ENCODE measurements at regions of chr2 and their contacts with region 1.

Region 1: GRCh38 chr2:120833127-120833675 is 97.5 kb downstream of the GLI2 start:
- DNase-seq: no peak
- H3K4me3 ChIP-seq: no peak overlapping the region
- H3K27ac ChIP-seq: no peak overlapping the region
- H3K4me1 ChIP-seq: peaks cover 2 to 16% (median 8%) of the 10 kb centered on the region in 4 experiments; a peak in 6 of 7 replicates
- H3K27me3 ChIP-seq: no peaks in the 10 kb centered on the region
- CTCF ChIP-seq: peak in 2 of 3 experiments; percentile 42; a peak in 3 of 4 replicates
- EP300 ChIP-seq: no peak
- POLR2A ChIP-seq: no peak
- RAD21 ChIP-seq: peak; percentile 53 to 67; a peak in 3 of 4 replicates

Region 2: DNA sequence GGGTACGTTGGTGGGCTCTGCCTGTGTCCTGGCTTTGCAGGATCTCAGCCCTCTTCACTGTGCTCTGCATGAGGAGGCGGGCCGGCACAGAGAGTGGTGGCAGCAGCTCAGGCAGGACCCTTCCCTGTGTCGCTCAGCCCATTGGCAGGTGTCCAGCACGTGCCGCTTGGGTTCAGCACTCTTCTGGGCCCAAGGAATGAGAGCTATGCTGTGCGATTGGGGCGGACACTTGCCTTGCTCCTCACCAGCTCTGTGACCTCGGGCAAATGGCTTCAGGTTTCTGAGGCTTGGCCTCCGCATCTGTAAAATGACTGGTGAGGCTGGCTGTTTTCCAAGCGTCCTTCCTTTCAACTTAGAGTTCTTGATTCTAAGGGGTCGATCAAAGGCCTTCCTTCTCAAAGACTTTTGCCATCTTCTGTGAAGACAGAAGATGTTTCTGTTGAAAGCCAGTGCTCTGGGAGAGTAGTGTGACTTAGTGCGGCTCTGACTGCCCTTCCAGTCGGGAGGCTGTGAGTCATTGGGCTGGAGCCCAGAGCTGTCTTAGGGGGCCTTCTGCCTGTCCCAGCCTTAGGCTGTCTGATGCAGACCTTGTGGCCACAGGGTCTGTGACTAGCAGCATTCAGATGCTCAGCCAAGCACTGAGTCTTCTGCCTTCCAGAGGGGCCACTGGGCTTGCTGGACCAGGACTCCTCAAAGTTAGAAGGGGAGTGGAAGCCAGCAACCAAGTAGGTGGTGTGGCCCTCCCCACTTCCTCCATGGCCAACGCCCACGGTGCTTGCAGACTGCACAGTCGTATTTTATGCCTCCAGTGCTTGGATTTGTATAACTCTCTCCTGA is 61.9 kb before region 1 on chr2:
- CTCF ChIA-PET with region 1: no interaction called
- POLR2A ChIA-PET with region 1: no interaction called
- DNase-seq: no peak
- H3K4me3 ChIP-seq: no peak overlapping the region
- H3K27ac ChIP-seq: no peak overlapping the region
- H3K4me1 ChIP-seq: peaks cover 20 to 58% (median 30%) of the 10 kb centered on the region in 4 experiments
- H3K27me3 ChIP-seq: no peaks in the 10 kb centered on the region
- CTCF ChIP-seq: no peak
- EP300 ChIP-seq: no peak
- POLR2A ChIP-seq: no peak
- RAD21 ChIP-seq: no peak

Region 3: DNA sequence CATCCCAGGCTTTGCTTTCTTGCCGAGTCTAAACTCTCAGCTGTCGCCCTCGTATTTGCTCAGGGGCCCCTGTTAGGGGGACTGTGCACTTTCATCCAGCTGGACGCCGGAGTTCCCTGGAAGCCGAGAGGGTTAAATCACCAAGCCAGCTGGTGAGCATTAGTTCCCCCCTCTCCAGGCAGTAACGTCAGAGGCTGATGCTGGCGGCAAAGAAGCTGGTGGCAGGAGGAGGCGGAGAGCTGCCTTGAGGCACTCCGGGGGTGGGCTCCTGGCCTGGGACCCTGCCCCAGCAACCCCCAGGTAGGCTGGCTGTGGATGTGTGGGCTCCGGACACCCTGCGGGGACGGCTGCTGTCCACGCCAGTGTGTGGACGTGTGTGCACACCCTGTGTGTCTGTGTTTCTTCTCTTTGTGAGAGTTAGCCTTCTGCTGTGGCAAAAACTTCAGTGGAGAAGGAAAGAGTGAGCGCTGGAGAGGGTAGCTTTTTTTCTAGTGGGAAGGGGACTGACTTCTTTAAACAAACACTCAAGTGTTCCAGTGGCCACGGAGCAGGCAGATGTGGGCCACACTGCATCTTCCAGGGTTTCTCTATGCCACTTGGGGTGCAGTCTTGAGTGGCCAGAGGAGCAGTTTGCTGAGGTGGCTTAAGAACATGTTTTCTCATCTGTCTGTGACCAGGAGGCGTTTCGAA is 12.8 kb before region 1 on chr2:
- CTCF ChIA-PET with region 1: interaction called, 20 read pairs
- POLR2A ChIA-PET with region 1: interaction called, 6 read pairs
- DNase-seq: no peak
- H3K4me3 ChIP-seq: no peak overlapping the region
- H3K27ac ChIP-seq: no peak overlapping the region
- H3K4me1 ChIP-seq: peaks cover 0 to 23% (median 16%) of the 10 kb centered on the region in 4 experiments; a peak in 6 of 7 replicates
- H3K27me3 ChIP-seq: no peaks in the 10 kb centered on the region
- CTCF ChIP-seq: no peak
- EP300 ChIP-seq: no peak
- POLR2A ChIP-seq: no peak
- RAD21 ChIP-seq: no peak

Region 4: DNA sequence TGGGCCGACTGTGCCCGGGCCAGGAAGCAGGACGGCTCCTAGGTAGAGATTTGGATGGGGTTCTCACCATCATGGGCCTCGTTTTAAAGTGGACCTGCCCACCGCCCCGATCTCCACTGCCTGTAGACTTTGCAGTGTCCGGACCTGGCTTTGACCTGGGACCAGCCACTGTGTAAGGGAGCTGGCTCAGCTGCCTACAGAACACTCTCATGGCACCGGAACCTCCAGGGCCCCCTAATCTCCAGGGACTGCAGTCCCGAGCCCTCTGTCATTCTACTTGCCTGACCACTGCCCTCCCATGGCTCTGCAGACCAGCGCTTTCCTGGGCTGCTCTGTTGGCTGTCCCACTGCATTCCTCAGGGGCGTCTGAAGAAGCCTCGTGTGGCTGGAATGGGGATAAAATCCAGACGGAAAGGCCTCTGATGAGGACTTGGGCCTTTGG is 23.2 kb after region 1 on chr2:
- CTCF ChIA-PET with region 1: interaction called, 14 read pairs
- POLR2A ChIA-PET with region 1: no interaction called
- DNase-seq: no peak
- H3K4me3 ChIP-seq: no peak overlapping the region
- H3K27ac ChIP-seq: no peak overlapping the region
- H3K4me1 ChIP-seq: peaks cover 2 to 28% (median 19%) of the 10 kb centered on the region in 4 experiments
- H3K27me3 ChIP-seq: no peaks in the 10 kb centered on the region
- CTCF ChIP-seq: peak; percentile 41 to 53 (median 51)
- EP300 ChIP-seq: no peak
- POLR2A ChIP-seq: no peak
- RAD21 ChIP-seq: peak; percentile 41 to 57

Region 5: GRCh38 chr2:120898961-120899750 is 66.0 kb after region 1 on chr2:
- CTCF ChIA-PET with region 1: interaction called, 16 read pairs
- POLR2A ChIA-PET with region 1: no interaction called
- DNase-seq: no peak
- H3K4me3 ChIP-seq: no peak overlapping the region
- H3K27ac ChIP-seq: no peak overlapping the region; the same call in 1 of the 2 replicates
- H3K4me1 ChIP-seq: peaks cover 18 to 44% (median 28%) of the 10 kb centered on the region in 4 experiments
- H3K27me3 ChIP-seq: no peaks in the 10 kb centered on the region; a peak in 1 of 7 replicates
- CTCF ChIP-seq: no peak
- EP300 ChIP-seq: no peak
- POLR2A ChIP-seq: no peak
- RAD21 ChIP-seq: no peak

Region 6: DNA sequence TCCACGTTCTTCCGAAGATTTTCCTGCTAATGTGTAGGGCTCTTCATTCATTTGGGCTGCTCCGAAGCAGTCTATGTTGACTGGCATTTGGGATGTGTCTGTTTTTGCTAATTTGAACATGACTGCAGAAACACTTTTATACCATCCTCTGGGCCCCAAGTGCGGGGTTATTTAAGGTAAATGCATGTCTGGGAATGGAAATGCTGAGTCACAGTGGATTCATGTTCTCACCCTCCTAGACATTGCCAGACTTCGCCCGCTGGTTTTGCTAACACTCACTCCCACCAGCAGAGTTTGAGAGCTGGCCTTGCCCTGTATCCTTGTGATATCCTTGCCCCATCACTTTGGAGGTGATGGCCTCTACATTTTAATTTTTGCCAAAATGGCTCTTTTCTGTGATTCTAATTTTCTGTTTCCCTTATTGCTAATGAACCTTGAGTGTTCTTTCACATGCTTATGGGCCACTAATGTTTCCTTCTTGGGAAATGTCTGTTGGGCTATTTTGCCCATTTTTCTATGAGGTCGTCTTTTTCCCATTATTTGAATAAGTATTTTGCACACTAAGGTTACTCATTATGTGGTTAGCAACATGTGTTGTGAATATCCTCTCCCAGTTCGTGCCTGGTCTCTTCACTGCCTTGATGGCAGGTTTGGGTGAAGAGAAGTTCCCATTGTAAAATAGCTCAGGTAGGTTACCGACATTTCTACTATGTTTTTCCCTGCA is 106.6 kb after region 1 on chr2:
- CTCF ChIA-PET with region 1: no interaction called
- POLR2A ChIA-PET with region 1: no interaction called
- DNase-seq: no peak
- H3K4me3 ChIP-seq: no peak overlapping the region
- H3K27ac ChIP-seq: no peak overlapping the region
- H3K4me1 ChIP-seq: peaks cover 0 to 3% (median 0%) of the 10 kb centered on the region in 4 experiments; a peak in 2 of 7 replicates
- H3K27me3 ChIP-seq: no peaks in the 10 kb centered on the region
- CTCF ChIP-seq: no peak
- EP300 ChIP-seq: no peak
- POLR2A ChIP-seq: no peak
- RAD21 ChIP-seq: no peak